CD4-positive, alpha-beta memory T cell (primary cell): ENCODE measurements at regions of chr12 and their contacts with region 1.

Region 1: DNA sequence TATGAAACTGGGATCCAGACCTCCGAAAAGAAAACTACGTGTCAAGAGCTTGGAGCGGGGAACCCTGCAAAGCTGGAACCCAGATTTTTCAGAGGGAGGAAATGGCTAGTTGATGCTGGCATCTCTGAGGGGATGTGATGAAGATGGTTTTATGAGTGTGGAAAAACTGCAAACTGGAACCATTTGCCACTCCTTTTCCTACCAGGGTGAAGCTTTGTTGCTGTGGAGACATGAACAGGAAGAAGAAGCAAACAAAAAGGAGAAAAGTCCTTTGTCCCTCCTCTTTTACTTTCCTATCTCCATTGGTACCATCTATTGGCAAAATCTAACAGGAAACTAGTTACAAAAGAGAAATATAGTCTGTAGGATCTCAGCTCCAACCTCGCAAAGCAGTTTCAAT is 39.2 kb downstream of the CDK17 start:
- DNase-seq: no peak
- H3K4me3 ChIP-seq: no peak overlapping the region
- H3K4me3 Mint-ChIP-seq: peak overlapping the region in 2 of 8 donors; percentile 24 to 64
- H3K27ac ChIP-seq: no peak overlapping the region
- H3K27ac Mint-ChIP-seq: peak overlapping the region in 1 of 7 donors; percentile 32
- H3K4me1 ChIP-seq: peaks cover 74% of the 10 kb centered on the region
- H3K4me1 Mint-ChIP-seq: peaks cover 52 to 84% (median 63%) of the 10 kb centered on the region in 4 donors
- H3K27me3 ChIP-seq: no peaks in the 10 kb centered on the region
- H3K27me3 Mint-ChIP-seq: no peaks in the 10 kb centered on the region

Region 2: GRCh38 chr12:96327346-96327745 is 33.7 kb before region 1 on chr12:
- CTCF ChIA-PET with region 1: no interaction called
- POLR2A ChIA-PET with region 1: no interaction called
- intact Hi-C with region 1: no loop called
- DNase-seq: no peak
- H3K4me3 ChIP-seq: no peak overlapping the region
- H3K4me3 Mint-ChIP-seq: peak overlapping the region in 2 of 8 donors; percentile 11 to 44
- H3K27ac ChIP-seq: no peak overlapping the region
- H3K27ac Mint-ChIP-seq: peak overlapping the region; percentile 43 to 88 (median 66)
- H3K4me1 ChIP-seq: peaks cover 47% of the 10 kb centered on the region
- H3K4me1 Mint-ChIP-seq: peaks cover 47 to 70% (median 57%) of the 10 kb centered on the region in 4 donors
- H3K27me3 ChIP-seq: no peaks in the 10 kb centered on the region
- H3K27me3 Mint-ChIP-seq: no peaks in the 10 kb centered on the region

Region 3: GRCh38 chr12:96350982-96351381 is 10.1 kb before region 1 on chr12:
- CTCF ChIA-PET with region 1: interaction called, 6 read pairs
- POLR2A ChIA-PET with region 1: interaction called, 3 read pairs
- intact Hi-C with region 1: loop called (anchors 2 kb)
- DNase-seq: no peak
- H3K4me3 ChIP-seq: no peak overlapping the region
- H3K4me3 Mint-ChIP-seq: peak overlapping the region in 3 of 8 donors; percentile 0 to 44 (median 5)
- H3K27ac ChIP-seq: no peak overlapping the region
- H3K27ac Mint-ChIP-seq: peak overlapping the region in 4 of 7 donors; percentile 4 to 75 (median 46)
- H3K4me1 ChIP-seq: peaks cover 89% of the 10 kb centered on the region
- H3K4me1 Mint-ChIP-seq: peaks cover 66 to 89% (median 74%) of the 10 kb centered on the region in 4 donors
- H3K27me3 ChIP-seq: no peaks in the 10 kb centered on the region
- H3K27me3 Mint-ChIP-seq: no peaks in the 10 kb centered on the region